H1 (cell line): ENCODE measurements at regions of chr9 and their contacts with region 1.

Region 1: DNA sequence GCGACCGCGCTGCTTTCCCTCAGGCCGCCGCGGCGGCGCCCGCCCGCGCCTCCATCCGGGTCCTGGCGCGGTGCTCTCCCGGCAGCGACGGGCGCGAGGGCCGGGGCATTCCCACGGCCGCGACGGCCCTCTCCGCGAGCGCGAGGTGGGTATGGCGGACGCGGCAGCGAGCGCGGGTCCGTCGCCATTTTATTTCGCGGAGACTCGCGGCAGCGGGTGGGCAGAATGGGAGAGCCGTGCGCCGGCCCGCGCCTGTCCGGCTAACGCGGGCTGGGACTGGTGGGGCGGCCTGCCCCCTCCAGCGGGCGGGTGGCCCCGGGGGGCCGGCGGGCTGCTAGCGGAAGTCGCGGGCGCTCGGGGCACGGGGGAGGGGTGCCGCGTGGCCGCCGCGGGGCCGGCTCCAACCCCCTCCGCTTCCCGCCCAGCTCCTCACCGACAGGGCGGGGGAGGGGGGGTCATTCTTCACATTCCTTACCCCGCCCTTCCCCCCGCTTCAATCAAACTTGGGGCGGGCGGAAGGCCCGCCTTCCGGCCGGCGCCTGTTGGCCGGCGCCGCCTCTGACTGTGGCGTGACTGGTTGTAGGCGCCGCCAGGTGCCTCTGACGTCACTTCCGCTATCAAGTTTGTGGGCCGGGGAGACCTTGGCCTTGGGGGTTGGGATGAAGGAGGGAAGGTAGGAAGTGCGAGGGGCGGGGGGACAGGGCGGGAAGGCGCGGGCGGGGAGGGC is 82.1 kb downstream of the PTPDC1 start:
- DNase-seq: peak; percentile 93 to 97
- H3K4me3 ChIP-seq: peak overlapping the region; percentile 76 to 89 (median 84)
- H3K27ac ChIP-seq: peak overlapping the region; percentile 99
- H3K4me1 ChIP-seq: no peaks in the 10 kb centered on the region
- H3K27me3 ChIP-seq: no peaks in the 10 kb centered on the region
- CTCF ChIP-seq: no peak
- EP300 ChIP-seq: peak in 1 of 2 experiments; percentile 81; a peak in 1 of 3 replicates
- POLR2A ChIP-seq: peak; percentile 24 to 96
- RAD21 ChIP-seq: no peak; a peak in 1 of 4 replicates

Region 2: GRCh38 chr9:94084314-94084713 is 82.1 kb before region 1 on chr9 and contains the start of gene PTPDC1:
- CTCF ChIA-PET with region 1: interaction called, 3 read pairs
- POLR2A ChIA-PET with region 1: interaction called, 15 read pairs
- DNase-seq: peak; percentile 47 to 77
- H3K4me3 ChIP-seq: peak within 1 kb of the TSS in 1 of 4 experiments; percentile 48; a peak in 2 of 8 replicates
- H3K27ac ChIP-seq: no peak within 1 kb of the TSS
- H3K4me1 ChIP-seq: peaks cover 0 to 5% (median 1%) of the 10 kb centered on the region in 4 experiments; a peak in 2 of 7 replicates
- H3K27me3 ChIP-seq: no peaks in the 10 kb centered on the region
- CTCF ChIP-seq: no peak
- EP300 ChIP-seq: no peak
- POLR2A ChIP-seq: peak in 1 of 2 experiments; percentile 63; a peak in 1 of 3 replicates
- RAD21 ChIP-seq: no peak; a peak in 1 of 4 replicates
- total RNA-seq, gene PTPDC1: 6.9 and 7.3 TPM in 2 replicates

Region 3: GRCh38 chr9:94097788-94098414 is 68.5 kb before region 1 on chr9:
- CTCF ChIA-PET with region 1: interaction called, 3 read pairs
- POLR2A ChIA-PET with region 1: interaction called, 16 read pairs
- DNase-seq: no peak
- H3K4me3 ChIP-seq: no peak overlapping the region
- H3K27ac ChIP-seq: no peak overlapping the region
- H3K4me1 ChIP-seq: peaks cover 0 to 5% (median under 1%) of the 10 kb centered on the region in 4 experiments; a peak in 2 of 7 replicates
- H3K27me3 ChIP-seq: no peaks in the 10 kb centered on the region
- CTCF ChIP-seq: no peak
- EP300 ChIP-seq: no peak
- POLR2A ChIP-seq: no peak
- RAD21 ChIP-seq: no peak

Region 4: GRCh38 chr9:94178927-94179326 is 12.5 kb after region 1 on chr9:
- CTCF ChIA-PET with region 1: interaction called, 5 read pairs
- POLR2A ChIA-PET with region 1: interaction called, 45 read pairs
- DNase-seq: no peak
- H3K4me3 ChIP-seq: no peak overlapping the region
- H3K27ac ChIP-seq: no peak overlapping the region
- H3K4me1 ChIP-seq: peaks cover 0 to 6% (median 0%) of the 10 kb centered on the region in 4 experiments; a peak in 2 of 7 replicates
- H3K27me3 ChIP-seq: no peaks in the 10 kb centered on the region
- CTCF ChIP-seq: no peak
- EP300 ChIP-seq: no peak
- POLR2A ChIP-seq: no peak
- RAD21 ChIP-seq: no peak

Region 5: DNA sequence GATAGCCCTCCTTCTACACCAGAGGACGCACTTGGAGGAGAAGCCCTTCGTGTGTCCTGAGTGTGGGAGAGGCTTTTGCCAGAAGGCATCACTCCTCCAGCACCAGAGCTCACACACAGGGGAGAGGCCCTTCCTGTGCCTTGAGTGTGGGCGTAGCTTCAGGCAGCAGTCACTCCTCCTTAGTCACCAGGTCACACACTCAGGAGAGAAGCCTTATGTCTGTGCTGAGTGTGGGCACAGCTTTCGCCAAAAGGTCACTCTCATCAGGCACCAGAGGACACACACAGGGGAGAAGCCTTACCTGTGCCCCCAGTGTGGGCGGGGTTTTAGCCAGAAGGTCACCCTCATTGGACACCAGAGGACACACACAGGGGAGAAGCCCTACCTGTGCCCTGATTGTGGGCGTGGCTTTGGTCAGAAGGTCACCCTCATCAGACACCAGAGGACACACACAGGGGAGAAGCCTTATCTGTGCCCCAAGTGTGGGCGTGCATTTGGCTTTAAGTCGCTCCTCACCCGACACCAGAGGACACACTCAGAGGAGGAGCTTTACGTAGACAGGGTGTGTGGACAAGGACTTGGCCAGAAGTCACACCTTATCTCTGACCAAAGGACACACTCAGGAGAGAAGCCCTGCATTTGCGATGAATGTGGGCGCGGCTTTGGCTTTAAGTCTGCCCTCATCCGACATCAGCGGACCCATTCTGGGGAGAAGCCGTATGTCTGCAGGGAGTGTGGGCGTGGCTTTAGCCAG is 134.3 kb after region 1 on chr9:
- CTCF ChIA-PET with region 1: no interaction called
- POLR2A ChIA-PET with region 1: no interaction called
- DNase-seq: no peak
- H3K4me3 ChIP-seq: no peak overlapping the region
- H3K27ac ChIP-seq: no peak overlapping the region
- H3K4me1 ChIP-seq: no peaks in the 10 kb centered on the region; a peak in 1 of 7 replicates
- H3K27me3 ChIP-seq: no peaks in the 10 kb centered on the region
- CTCF ChIP-seq: no peak
- EP300 ChIP-seq: no peak
- POLR2A ChIP-seq: no peak
- RAD21 ChIP-seq: no peak

Region 6: GRCh38 chr9:94443032-94443722 is 276.8 kb after region 1 on chr9:
- CTCF ChIA-PET with region 1: no interaction called
- POLR2A ChIA-PET with region 1: no interaction called
- DNase-seq: no peak
- H3K4me3 ChIP-seq: no peak overlapping the region
- H3K27ac ChIP-seq: no peak overlapping the region
- H3K4me1 ChIP-seq: no peaks in the 10 kb centered on the region
- H3K27me3 ChIP-seq: no peaks in the 10 kb centered on the region
- CTCF ChIP-seq: no peak
- EP300 ChIP-seq: no peak
- POLR2A ChIP-seq: no peak
- RAD21 ChIP-seq: no peak